HepG2 (cell line): ENCODE measurements at regions of chr4 and their contacts with region 1.

Region 1: GRCh38 chr4:38939165-38939564 is 71.6 kb downstream of the FAM114A1 start:
- DNase-seq: no peak
- ATAC-seq: no peak
- H3K4me3 ChIP-seq: no peak overlapping the region
- H3K27ac ChIP-seq: no peak overlapping the region
- H3K4me1 ChIP-seq: no peaks in the 10 kb centered on the region
- H3K27me3 ChIP-seq: no peaks in the 10 kb centered on the region
- CTCF ChIP-seq: no peak
- EP300 ChIP-seq: no peak
- POLR2A ChIP-seq: no peak
- RAD21 ChIP-seq: no peak

Region 2: DNA sequence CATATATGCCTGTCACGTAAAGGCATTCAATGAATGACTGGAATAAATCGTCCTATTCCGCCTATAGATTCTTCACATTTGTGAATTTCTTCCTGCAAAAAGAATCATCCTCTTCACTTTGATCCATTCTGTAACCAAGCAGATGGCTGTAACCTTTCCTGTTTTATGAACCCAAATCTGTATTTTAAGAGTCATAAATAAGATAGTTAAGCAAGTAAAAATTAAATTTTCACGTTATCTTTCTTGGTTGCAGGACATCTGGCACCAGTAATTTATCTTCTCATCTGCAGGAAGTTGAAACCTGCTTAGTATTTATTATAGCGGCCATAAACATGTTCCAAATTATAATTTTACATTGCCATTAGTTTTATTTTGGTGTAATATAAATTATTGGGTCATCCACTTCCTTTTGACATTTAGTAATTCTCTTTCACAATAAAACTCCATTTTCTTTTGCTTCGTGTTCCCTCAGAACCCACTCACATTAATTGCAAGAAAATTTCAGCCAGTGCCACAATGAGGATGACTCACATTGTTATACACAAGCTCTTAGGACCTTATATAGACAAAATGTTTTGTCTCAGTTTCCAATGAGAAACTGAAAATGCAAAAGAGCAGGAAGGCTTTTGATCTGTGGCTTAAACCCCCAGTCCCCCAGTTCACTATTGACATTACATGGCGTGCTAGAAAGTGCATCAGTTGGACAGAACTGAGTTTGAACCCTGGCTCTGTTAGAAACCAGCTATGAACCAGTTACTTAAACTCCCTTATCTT is 41.9 kb after region 1 on chr4:
- CTCF ChIA-PET with region 1: no interaction called
- POLR2A ChIA-PET with region 1: no interaction called
- in situ Hi-C with region 1: no loop called
- intact Hi-C with region 1: loop called (anchors 10 kb)
- DNase-seq: peak; percentile 16
- ATAC-seq: no peak
- H3K4me3 ChIP-seq: no peak overlapping the region
- H3K27ac ChIP-seq: no peak overlapping the region
- H3K4me1 ChIP-seq: peaks cover 32% of the 10 kb centered on the region
- H3K27me3 ChIP-seq: no peaks in the 10 kb centered on the region
- CTCF ChIP-seq: no peak
- EP300 ChIP-seq: no peak
- POLR2A ChIP-seq: no peak
- RAD21 ChIP-seq: no peak